ENCODE measurements at regions of chr20 and their contacts with region 1.

Region 1: GRCh38 chr20:23331450-23332350 is 18.9 kb upstream of the NXT1 start:
- DNase-seq: no peak
- ATAC-seq: no peak
- H3K4me3 ChIP-seq: no peak overlapping the region
- H3K27ac ChIP-seq: no peak overlapping the region
- H3K4me1 ChIP-seq: no peaks in the 10 kb centered on the region
- CTCF ChIP-seq: no peak
- EP300 ChIP-seq: no peak
- POLR2A ChIP-seq: no peak
- RAD21 ChIP-seq: no peak

Region 2: DNA sequence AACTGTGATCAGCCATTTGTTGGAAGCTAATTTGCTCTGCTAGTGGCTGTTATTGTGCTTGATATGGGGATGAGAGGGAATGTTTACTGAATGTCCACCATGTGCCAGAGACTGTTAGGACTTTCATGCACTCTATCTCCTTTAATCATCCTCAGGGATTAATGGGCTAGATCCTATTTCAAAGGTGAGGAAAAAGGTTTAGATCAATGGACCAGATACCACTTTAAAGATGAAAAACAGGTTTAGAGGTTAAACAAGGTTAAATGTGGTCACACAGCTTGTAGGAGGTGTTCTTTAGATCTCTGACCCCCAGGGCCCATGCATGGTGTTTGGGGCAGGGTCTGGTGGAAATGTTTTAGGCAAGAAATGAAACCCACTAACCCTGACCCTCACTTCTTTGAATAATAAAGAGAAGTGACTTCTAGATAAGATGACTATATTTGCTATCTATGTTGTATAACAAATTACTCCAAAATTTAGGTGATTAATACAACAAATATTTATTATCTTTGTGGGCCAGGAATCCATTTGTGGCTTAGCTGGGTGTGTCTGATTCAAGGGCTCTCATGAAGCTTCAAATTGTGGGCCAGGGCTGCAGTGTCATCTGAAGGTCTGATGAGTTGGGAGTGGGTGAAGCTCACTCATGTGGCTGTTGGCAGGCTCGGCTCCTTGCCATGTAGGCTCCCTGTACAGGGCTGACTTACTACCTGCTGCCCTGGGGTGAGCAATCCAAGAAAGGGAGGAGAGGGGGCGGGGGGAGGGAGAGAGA is 619.5 kb before region 1 on chr20:
- CTCF ChIA-PET with region 1: no interaction called
- POLR2A ChIA-PET with region 1: no interaction called
- DNase-seq: no peak
- ATAC-seq: no peak
- H3K4me3 ChIP-seq: no peak overlapping the region
- H3K27ac ChIP-seq: peak overlapping the region in 1 of 2 experiments; percentile 57; a peak in 2 of 6 replicates
- H3K4me1 ChIP-seq: peaks cover 26% of the 10 kb centered on the region
- CTCF ChIP-seq: no peak
- EP300 ChIP-seq: no peak
- POLR2A ChIP-seq: no peak
- RAD21 ChIP-seq: no peak

Region 3: DNA sequence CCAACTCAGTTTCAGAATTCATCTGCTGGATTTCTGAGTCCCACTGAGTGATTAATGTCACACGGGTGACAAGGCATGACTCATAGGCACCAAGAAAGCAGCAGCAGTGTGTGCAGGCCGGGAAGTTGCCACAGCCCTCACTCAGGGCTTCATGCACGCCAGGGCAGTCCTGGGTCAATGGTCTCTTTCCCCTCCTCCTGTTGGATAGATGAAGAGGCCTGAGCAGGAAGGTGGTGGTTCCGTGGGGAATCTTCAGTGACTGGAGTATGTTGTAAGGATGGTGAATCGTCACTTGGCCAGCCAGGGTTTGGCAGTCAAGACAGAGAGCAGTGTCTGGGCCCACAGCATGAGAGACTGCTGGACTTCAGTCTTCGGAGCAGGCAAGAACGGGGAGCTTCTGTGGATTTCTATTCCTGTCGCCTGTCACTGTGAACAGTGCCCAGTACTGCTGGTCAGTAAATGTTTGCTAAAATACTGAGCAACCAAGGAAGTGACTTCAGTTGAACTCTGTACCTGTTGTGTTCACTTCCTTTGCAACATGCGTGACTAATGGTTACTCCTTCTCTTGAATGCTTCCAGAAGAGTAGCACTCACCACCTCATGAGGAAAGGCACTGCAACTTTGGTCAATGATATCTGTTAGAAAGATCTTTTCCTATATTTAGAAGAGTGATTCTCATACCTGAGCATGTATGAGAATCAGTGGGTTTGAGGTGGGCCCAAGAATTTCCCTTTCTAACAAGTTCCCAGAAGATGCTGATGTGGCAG is 183.6 kb before region 1 on chr20:
- CTCF ChIA-PET with region 1: no interaction called
- POLR2A ChIA-PET with region 1: no interaction called
- DNase-seq: peak; percentile 49 to 57
- ATAC-seq: peak; percentile 56 to 69; a peak in 5 of 6 replicates
- H3K4me3 ChIP-seq: no peak overlapping the region
- H3K27ac ChIP-seq: peak overlapping the region; percentile 65 to 69
- H3K4me1 ChIP-seq: peaks cover 24% of the 10 kb centered on the region
- CTCF ChIP-seq: no peak
- EP300 ChIP-seq: no peak
- POLR2A ChIP-seq: no peak
- RAD21 ChIP-seq: no peak

Region 4: DNA sequence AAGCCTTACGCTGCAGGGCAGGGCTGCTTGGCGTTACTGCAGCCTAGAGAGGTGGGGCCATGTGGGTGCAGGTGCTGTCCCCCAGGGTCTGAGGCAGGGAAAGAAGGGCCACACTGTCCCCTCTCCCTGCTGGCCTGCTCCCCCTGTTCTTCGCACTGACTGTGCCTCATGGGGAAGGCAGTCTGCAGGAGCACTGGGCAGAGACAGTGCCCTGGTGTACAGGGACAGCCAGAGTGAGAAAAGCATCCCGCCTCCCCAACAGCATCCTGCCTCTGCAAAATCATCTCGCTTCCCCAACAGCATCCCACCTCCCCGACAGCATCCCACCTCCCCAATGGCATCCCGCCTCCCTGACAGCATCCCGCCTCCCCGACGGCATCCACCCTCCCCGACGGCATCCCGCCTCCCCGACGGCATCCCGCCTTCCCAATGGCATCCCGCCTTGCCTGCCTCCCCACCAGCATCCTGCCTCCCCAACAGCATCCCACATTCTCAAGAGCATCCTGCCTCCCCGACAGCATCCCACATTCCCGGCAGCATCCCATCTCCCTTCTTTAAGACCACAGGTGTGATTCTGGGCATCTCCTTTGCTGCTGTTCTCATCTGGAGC is 27.2 kb before region 1 on chr20:
- CTCF ChIA-PET with region 1: interaction called, 10 read pairs
- POLR2A ChIA-PET with region 1: no interaction called
- DNase-seq: no peak
- ATAC-seq: no peak
- H3K4me3 ChIP-seq: no peak overlapping the region
- H3K27ac ChIP-seq: no peak overlapping the region
- H3K4me1 ChIP-seq: no peaks in the 10 kb centered on the region
- CTCF ChIP-seq: no peak
- EP300 ChIP-seq: no peak
- POLR2A ChIP-seq: no peak
- RAD21 ChIP-seq: no peak

Region 5: DNA sequence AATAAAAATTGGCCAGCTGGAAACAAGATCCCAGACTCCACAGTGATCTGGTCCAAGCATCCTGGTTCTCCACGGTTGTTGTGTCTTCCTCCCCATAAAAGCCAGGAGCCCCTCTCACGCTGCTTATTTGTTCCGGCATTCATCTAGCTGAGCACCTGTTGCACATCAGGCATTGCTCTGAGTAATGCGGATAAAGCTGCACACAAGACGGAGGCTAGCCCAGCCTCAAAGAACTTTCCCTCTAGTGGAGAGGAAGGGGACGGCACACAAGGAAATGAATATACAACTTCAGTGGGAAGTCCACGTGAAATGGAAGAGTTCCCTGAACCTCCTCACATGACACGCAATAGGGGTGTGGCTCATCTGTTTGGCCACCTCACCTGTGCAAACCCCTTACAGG is 11.4 kb before region 1 on chr20:
- CTCF ChIA-PET with region 1: interaction called, 76 read pairs
- POLR2A ChIA-PET with region 1: no interaction called
- DNase-seq: peak; percentile 55 to 64
- ATAC-seq: peak; percentile 81 to 93; a peak in 5 of 6 replicates
- H3K4me3 ChIP-seq: no peak overlapping the region
- H3K27ac ChIP-seq: no peak overlapping the region
- H3K4me1 ChIP-seq: no peaks in the 10 kb centered on the region; the same call in 2 of the 3 replicates
- CTCF ChIP-seq: peak; percentile 28; the same call in 2 of the 3 replicates
- EP300 ChIP-seq: no peak
- POLR2A ChIP-seq: no peak
- RAD21 ChIP-seq: peak; percentile 30 to 41; a peak in 3 of 5 replicates

Region 6: DNA sequence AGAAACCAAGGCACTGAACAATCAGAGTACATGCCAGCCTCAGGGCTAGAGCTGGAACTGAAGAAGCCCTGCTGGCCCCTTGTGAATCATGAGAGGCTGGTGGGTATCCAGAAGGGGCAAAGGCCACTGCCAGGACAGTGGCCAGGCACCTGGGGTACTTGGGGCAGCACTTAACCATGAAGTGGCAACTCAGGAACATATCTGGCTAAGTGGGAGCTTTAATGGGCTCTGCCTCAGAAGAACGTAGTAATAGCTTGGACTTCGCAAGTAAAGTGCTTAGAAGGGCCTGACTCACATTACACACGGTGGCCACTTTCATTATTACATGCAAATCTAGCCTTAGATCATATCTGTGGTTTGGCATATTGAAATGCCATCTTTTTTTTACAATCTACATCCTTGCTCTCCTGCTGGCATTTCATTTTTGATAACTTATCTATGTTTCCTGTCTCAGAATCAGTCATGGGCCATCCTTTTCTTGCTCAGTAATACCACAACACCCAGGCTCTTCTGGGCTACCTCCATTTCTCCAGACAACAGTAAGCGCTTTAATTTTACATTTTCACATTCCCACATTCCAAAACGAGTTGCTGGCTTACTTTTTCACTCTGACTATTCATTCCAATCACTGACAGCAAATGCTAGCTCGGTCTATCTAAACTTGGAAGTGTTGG is 68.0 kb after region 1 on chr20:
- CTCF ChIA-PET with region 1: no interaction called
- POLR2A ChIA-PET with region 1: no interaction called
- DNase-seq: peak; percentile 24 to 28
- ATAC-seq: peak; percentile 66 to 80; a peak in 5 of 6 replicates
- H3K4me3 ChIP-seq: no peak overlapping the region
- H3K27ac ChIP-seq: no peak overlapping the region
- H3K4me1 ChIP-seq: no peaks in the 10 kb centered on the region
- CTCF ChIP-seq: no peak
- EP300 ChIP-seq: no peak
- POLR2A ChIP-seq: no peak
- RAD21 ChIP-seq: no peak

Region 7: DNA sequence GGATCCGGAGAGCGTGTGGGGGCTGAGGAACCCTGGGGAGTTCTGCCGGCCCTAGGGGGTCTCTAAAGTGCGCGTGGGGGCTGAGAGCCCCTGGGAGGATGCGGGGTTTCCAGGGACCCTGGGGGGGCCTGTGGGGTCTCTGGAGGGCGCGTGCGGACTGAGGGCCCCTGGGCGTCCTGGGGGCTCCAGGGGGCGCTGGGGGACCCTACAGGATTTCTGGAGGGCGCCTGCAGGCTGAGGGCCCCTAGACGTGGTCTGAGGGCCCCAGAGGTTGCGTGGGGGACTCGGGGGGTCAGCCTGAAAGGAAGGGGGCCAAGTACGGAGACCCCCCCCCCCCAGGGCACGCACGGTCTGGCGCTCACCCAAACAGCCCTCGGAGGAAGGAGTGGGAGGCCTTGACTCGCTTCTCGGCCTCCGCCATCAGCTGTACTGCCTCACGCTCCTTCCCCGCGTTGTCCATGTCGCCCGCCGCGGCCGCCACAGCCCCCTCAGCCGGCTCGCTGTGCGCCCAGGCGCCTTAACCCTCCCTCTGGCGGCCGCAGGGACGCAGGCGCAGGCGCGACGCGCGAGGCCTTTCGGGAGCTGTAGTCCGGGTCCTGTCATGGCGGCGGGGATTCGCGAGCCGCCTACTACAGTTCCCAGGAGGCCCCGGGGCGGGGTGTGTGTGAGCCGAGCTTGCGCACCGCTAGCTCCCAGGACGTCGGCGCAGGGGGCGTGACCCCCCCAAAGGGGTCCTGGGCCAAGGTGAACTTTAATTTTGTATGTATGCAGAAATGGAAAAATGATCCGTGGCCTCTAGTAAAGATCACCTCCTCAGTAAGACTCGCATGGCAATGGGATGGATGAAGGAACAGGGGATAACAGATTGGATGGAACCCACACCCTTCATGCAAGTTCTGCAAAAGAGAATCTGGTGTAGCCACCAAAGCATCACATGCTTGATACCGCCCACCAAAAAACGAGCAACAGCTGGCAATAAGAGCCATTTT is 89.5 kb after region 1 on chr20 and contains the start of gene NAPB:
- CTCF ChIA-PET with region 1: no interaction called
- POLR2A ChIA-PET with region 1: no interaction called
- DNase-seq: peak; percentile 91 to 94
- ATAC-seq: peak; percentile 98 to 100
- H3K4me3 ChIP-seq: peak within 1 kb of the TSS; percentile 84
- H3K27ac ChIP-seq: peak within 1 kb of the TSS; percentile 84 to 93
- H3K4me1 ChIP-seq: peaks cover 10% of the 10 kb centered on the region; the same call in 2 of the 3 replicates
- CTCF ChIP-seq: peak; percentile 9; the same call in 2 of the 3 replicates
- EP300 ChIP-seq: no peak
- POLR2A ChIP-seq: peak; percentile 89
- RAD21 ChIP-seq: no peak
- polyA plus RNA-seq, gene NAPB: 8.2 and 12.7 TPM in 2 replicates

Measured in A549 (cell line).